A673 (cell line): ENCODE measurements at regions of chr17 and their contacts with region 1.

Region 1: GRCh38 chr17:59680314-59680713 is 26.9 kb downstream of the PTRH2 start:
- DNase-seq: no peak
- H3K4me3 ChIP-seq: no peak overlapping the region
- H3K27ac ChIP-seq: no peak overlapping the region
- H3K4me1 ChIP-seq: no peaks in the 10 kb centered on the region
- H3K27me3 ChIP-seq: no peaks in the 10 kb centered on the region
- CTCF ChIP-seq: no peak

Region 2: GRCh38 chr17:59521204-59522126 is 158.8 kb before region 1 on chr17:
- CTCF ChIA-PET with region 1: no interaction called
- POLR2A ChIA-PET with region 1: no interaction called
- intact Hi-C with region 1: loop called (anchors 10 kb)
- DNase-seq: peak; percentile 78
- H3K4me3 ChIP-seq: no peak overlapping the region
- H3K27ac ChIP-seq: no peak overlapping the region
- H3K4me1 ChIP-seq: peaks cover 3% of the 10 kb centered on the region
- H3K27me3 ChIP-seq: peaks cover 14% of the 10 kb centered on the region
- CTCF ChIP-seq: peak; percentile 89

Region 3: GRCh38 chr17:59641799-59642489 is 38.4 kb before region 1 on chr17:
- CTCF ChIA-PET with region 1: no interaction called
- POLR2A ChIA-PET with region 1: no interaction called
- intact Hi-C with region 1: no loop called
- DNase-seq: no peak
- H3K4me3 ChIP-seq: no peak overlapping the region
- H3K27ac ChIP-seq: peak overlapping the region; percentile 16
- H3K4me1 ChIP-seq: peaks cover 14% of the 10 kb centered on the region
- H3K27me3 ChIP-seq: no peaks in the 10 kb centered on the region
- CTCF ChIP-seq: no peak

Region 4: DNA sequence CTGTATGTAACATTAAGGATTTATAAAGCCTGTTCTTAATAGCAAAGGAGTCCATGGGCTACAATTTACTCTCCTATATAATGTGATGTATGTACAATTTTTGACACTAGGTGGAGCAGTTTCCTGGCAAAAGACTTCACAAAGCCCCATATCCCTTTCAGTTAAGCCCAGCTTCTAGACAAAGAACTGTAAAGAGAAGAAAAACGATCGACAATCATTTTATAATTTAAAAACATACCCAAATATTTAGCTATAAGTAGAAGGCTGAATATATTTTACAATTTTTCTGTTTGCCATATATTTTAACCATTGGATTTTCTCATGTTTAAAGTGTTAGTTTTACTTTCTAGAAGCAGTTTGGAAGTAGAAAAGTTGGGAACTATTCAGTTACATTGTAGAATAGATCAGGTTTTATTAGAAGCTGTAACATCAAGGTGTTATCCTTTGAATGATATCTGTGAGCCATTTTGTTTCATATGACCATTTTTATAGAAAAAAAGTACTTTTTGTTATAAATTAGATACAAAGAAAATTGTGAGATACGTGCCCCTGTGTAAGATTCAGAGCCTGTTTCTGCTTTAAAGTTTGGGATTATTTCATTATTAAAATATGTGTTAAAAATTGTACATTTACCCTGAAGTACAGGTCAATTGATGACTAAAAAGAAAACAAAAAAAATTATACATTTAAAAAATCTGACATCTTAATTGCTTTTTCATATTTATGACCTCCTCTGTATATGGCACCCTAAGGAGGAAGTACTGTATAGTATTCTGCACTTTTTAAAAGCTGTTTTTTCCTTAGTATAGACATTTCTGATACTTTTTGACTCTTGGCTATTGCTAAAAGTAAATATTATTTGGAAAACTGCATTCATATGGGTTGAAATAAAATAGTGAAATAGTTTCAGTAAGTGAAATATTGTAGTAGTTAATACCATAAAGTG is 73.5 kb after region 1 on chr17:
- CTCF ChIA-PET with region 1: no interaction called
- POLR2A ChIA-PET with region 1: no interaction called
- intact Hi-C with region 1: no loop called
- DNase-seq: peak; percentile 92
- H3K4me3 ChIP-seq: no peak overlapping the region
- H3K27ac ChIP-seq: peak overlapping the region; percentile 72
- H3K4me1 ChIP-seq: peaks cover 26% of the 10 kb centered on the region
- H3K27me3 ChIP-seq: no peaks in the 10 kb centered on the region
- CTCF ChIP-seq: peak; percentile 79